Heart right ventricle (tissue), 16 donors: ENCODE measurements at regions of chr6 and their contacts with region 1.

Region 1: GRCh38 chr6:12957321-12958051 is 240.9 kb downstream of the PHACTR1 start:
- DNase-seq: peak; percentile 70 to 75
- ATAC-seq: peak; percentile 83 to 90 (median 89)
- H3K4me3 ChIP-seq: peak overlapping the region; percentile 23 to 79 (median 72)
- H3K27ac ChIP-seq: peak overlapping the region; percentile 31 to 93 (median 86)
- H3K4me1 ChIP-seq: peaks cover 0 to 51% (median 22%) of the 10 kb centered on the region in 9 donors
- H3K27me3 ChIP-seq: no peaks in the 10 kb centered on the region
- CTCF ChIP-seq: peak in 4 of 9 donors; percentile 15 to 54 (median 46)

Region 2: GRCh38 chr6:13328076-13328874 is 370.8 kb after region 1 on chr6 and contains the start of gene TBC1D7:
- intact Hi-C with region 1: loop called in 2 of 10 experiments (anchors 5 kb)
- DNase-seq: peak; percentile 91 to 95
- ATAC-seq: peak; percentile 93 to 98 (median 96)
- H3K4me3 ChIP-seq: peak within 1 kb of the TSS; percentile 75 to 95 (median 82)
- H3K27ac ChIP-seq: peak within 1 kb of the TSS; percentile 71 to 98 (median 95)
- H3K4me1 ChIP-seq: peaks cover 0 to 45% (median 21%) of the 10 kb centered on the region in 9 donors
- H3K27me3 ChIP-seq: no peaks in the 10 kb centered on the region
- CTCF ChIP-seq: peak in 2 of 9 donors; percentile 15 to 17
- total RNA-seq, gene TBC1D7: 21.7 to 42.6 (median 28.6) TPM

Region 3: DNA sequence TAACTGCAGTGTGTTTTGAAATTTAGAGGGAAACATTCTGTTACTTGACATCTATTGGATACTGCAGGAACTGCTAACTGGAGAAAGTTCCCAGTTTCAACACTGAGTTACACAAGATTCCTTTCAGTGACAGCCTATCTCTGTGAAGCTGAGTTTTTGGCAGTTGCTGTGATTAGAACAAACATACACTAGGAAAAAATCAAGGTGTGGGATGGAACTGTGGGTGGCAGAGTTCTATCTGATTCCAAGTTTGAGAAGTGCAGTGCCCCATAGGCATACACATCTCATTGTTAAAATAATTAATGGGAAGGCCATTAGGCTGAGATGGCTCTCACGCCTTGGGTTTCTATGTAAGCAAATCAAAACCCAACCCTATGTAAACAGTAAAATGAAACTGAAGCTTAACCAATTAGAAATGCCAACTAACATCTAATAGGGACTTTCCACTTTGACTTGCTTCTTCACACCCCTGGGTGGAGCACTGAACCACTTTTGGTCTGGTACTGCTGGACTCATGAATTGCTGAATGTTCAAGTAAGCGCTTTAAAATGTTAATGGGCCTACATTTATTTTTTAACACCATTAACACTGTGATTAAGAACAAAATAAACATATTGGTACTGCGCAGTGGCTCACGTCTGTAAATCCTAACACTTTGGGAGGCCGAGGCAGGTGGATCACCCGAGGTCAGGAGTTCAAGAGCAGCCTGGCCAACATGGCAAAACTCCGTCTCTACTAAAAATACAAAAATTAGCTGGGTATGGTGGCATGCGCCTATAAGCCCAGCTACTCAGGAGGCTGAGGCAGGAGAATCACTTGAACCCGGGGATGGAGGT is 426.1 kb after region 1 on chr6:
- intact Hi-C with region 1: no loop called
- DNase-seq: no peak
- ATAC-seq: peak in 6 of 8 donors; percentile 44 to 61 (median 52)
- H3K4me3 ChIP-seq: no peak overlapping the region
- H3K27ac ChIP-seq: peak overlapping the region in 2 of 10 donors; percentile 28 to 39
- H3K4me1 ChIP-seq: peaks cover 5 to 69% (median 28%) of the 10 kb centered on the region in 9 donors
- H3K27me3 ChIP-seq: no peaks in the 10 kb centered on the region
- CTCF ChIP-seq: peak in 7 of 9 donors; percentile 14 to 50 (median 34)